Common myeloid progenitor, CD34-positive (primary cell): ENCODE measurements at regions of chr11 and their contacts with region 1.

Region 1: GRCh38 chr11:65506770-65507505 is 8.1 kb downstream of the MALAT1 start:
- DNase-seq: peak; percentile 85 to 96 (median 96)
- H3K4me3 ChIP-seq: peak overlapping the region in 2 of 7 experiments; percentile 28 to 100
- H3K27ac ChIP-seq: peak overlapping the region in 1 of 2 experiments; percentile 100
- H3K4me1 ChIP-seq: peaks cover 18 to 46% (median 39%) of the 10 kb centered on the region in 4 experiments
- H3K27me3 ChIP-seq: no peaks in the 10 kb centered on the region

Region 2: GRCh38 chr11:65274735-65275682 is 231.9 kb before region 1 on chr11:
- CTCF ChIA-PET with region 1: interaction called, 13 read pairs
- POLR2A ChIA-PET with region 1: interaction called, 4 read pairs
- DNase-seq: peak; percentile 68 to 86 (median 76)
- H3K4me3 ChIP-seq: no peak overlapping the region
- H3K27ac ChIP-seq: no peak overlapping the region
- H3K4me1 ChIP-seq: no peaks in the 10 kb centered on the region
- H3K27me3 ChIP-seq: no peaks in the 10 kb centered on the region

Region 3: GRCh38 chr11:65382033-65382807 is 124.7 kb before region 1 on chr11 and contains the start of gene SLC25A45:
- CTCF ChIA-PET with region 1: interaction called, 15 read pairs
- POLR2A ChIA-PET with region 1: interaction called, 11 read pairs
- DNase-seq: peak; percentile 95 to 98 (median 97)
- H3K4me3 ChIP-seq: peak within 1 kb of the TSS; percentile 39 to 80 (median 62)
- H3K27ac ChIP-seq: peak within 1 kb of the TSS; percentile 88 to 93
- H3K4me1 ChIP-seq: peaks cover 2 to 96% (median 87%) of the 10 kb centered on the region in 4 experiments
- H3K27me3 ChIP-seq: no peaks in the 10 kb centered on the region

Region 4: DNA sequence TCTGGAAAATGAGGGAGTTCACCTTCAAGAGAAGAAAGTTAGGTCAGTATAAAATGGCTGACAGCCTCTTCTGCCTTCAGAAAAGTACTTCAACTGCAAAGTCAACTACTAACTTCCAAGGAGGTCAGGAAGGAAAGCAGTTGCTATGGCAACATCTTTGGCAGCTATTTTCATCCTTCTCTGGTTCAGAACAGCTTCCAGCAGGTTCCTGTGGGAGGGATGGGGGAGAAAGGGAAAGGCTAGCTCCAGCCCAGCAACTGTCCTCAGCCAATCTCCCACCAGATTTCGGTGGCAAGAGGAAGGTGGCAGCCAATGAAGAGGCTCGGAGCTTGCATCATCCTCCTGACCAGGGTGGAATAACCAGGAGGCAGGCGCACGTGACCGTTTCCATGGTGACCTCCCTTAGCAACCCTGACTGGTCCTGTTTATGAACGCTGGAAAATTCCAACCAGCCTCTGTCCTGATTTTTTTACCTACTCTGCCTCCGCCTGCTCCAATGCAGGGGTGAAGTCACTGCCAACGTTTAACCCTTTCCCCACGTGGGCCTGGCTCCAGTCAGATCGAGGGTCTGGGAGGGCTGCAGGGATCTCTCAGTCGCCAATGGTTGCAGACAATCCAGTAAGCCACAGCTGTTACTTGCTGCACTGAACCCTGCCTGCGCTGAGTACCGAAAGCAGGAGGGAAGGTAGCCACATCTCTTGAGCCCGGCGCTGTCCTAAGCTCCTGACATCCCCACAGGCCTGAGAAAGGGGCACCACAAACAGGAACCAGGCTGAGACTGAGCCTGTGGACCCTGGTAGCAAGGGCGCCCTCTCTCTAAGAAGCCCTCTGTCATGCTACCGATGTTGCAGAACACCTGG is 19.3 kb before region 1 on chr11:
- CTCF ChIA-PET with region 1: interaction called, 4 read pairs
- POLR2A ChIA-PET with region 1: interaction called, 91 read pairs
- DNase-seq: peak; percentile 90 to 97 (median 96)
- H3K4me3 ChIP-seq: peak overlapping the region in 2 of 7 experiments; percentile 20 to 23
- H3K27ac ChIP-seq: peak overlapping the region; percentile 79 to 80
- H3K4me1 ChIP-seq: peaks cover under 1 to 56% (median 49%) of the 10 kb centered on the region in 4 experiments
- H3K27me3 ChIP-seq: no peaks in the 10 kb centered on the region

Region 5: GRCh38 chr11:65524741-65525545 is 18.0 kb after region 1 on chr11 and contains the start of gene SCYL1:
- CTCF ChIA-PET with region 1: interaction called, 11 read pairs
- POLR2A ChIA-PET with region 1: interaction called, 10 read pairs
- DNase-seq: peak in 2 of 3 donors; percentile 75 to 77
- H3K4me3 ChIP-seq: peak within 1 kb of the TSS; percentile 67 to 85 (median 77)
- H3K27ac ChIP-seq: peak within 1 kb of the TSS in 1 of 2 experiments; percentile 79
- H3K4me1 ChIP-seq: peaks cover 10 to 44% (median 38%) of the 10 kb centered on the region in 4 experiments
- H3K27me3 ChIP-seq: no peaks in the 10 kb centered on the region